ENCODE measurements at regions of chr3 and their contacts with region 1.

Region 1: GRCh38 chr3:176172430-176172954 is 1024.8 kb downstream of the TBL1XR1 start:
- DNase-seq: no peak
- ATAC-seq: no peak
- H3K4me3 ChIP-seq: no peak overlapping the region
- H3K27ac ChIP-seq: no peak overlapping the region
- H3K4me1 ChIP-seq: no peaks in the 10 kb centered on the region
- H3K27me3 ChIP-seq: no peaks in the 10 kb centered on the region
- CTCF ChIP-seq: no peak
- EP300 ChIP-seq: no peak
- POLR2A ChIP-seq: no peak
- RAD21 ChIP-seq: no peak

Region 2: DNA sequence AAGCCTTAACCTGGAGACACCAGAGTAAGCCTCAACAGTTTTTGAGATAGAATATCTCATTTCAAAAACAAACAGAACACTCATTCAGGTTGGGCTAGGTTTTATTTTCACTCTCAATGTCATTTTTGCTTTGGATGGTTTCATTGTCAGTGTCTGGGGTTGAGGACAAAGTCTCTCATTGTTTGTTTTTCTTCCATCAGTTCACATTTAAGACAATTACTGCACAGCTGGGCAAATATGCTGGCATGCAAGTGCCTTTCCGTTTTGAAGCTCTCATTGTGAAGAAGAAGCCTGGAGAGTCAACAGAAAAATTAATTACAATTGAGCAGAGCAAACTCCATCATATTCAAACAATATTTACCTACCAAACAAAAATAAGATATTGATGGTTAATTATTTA is 25.2 kb before region 1 on chr3:
- CTCF ChIA-PET with region 1: no interaction called
- POLR2A ChIA-PET with region 1: no interaction called
- in situ Hi-C with region 1: no loop called
- intact Hi-C with region 1: loop called (anchors 1 kb)
- DNase-seq: no peak
- ATAC-seq: no peak
- H3K4me3 ChIP-seq: no peak overlapping the region
- H3K27ac ChIP-seq: no peak overlapping the region
- H3K4me1 ChIP-seq: no peaks in the 10 kb centered on the region
- H3K27me3 ChIP-seq: no peaks in the 10 kb centered on the region
- CTCF ChIP-seq: no peak
- EP300 ChIP-seq: no peak
- POLR2A ChIP-seq: no peak
- RAD21 ChIP-seq: no peak